Heart right ventricle (tissue), 16 donors: ENCODE measurements at regions of chr1 and their contacts with region 1.

Region 1: GRCh38 chr1:45643978-45644377 is 20.1 kb upstream of the CCDC17 start:
- DNase-seq: no peak
- ATAC-seq: no peak
- H3K4me3 ChIP-seq: no peak overlapping the region
- H3K27ac ChIP-seq: peak overlapping the region in 2 of 10 donors; percentile 0 to 17
- H3K4me1 ChIP-seq: peaks cover 0 to 36% (median 20%) of the 10 kb centered on the region in 9 donors
- H3K27me3 ChIP-seq: no peaks in the 10 kb centered on the region
- CTCF ChIP-seq: peak in 3 of 9 donors; percentile 9 to 31 (median 28)

Region 2: DNA sequence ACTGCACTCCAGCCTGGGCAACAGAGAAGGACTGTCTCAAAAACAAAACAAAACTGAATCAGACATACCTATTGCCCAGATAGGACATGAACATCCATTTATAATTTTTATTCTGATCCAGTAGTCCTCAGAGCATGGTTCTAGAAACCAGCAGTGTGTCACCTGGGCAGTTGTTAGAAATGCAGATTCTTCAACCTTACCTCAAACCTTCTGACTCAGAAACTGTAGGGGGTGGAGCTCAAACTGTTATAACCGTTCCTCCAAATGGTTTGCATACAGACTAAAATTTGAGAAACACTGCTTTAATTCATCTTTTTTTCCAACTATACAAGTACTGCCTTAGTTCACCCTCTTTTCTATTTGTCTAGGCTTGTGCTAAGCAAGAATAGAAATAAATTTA is 54.1 kb before region 1 on chr1:
- intact Hi-C with region 1: loop called in 1 of 10 experiments (anchors 10 kb)
- DNase-seq: no peak
- ATAC-seq: peak in 2 of 8 donors; percentile 3 to 10
- H3K4me3 ChIP-seq: peak overlapping the region in 3 of 10 donors; percentile 19 to 36 (median 35)
- H3K27ac ChIP-seq: peak overlapping the region in 4 of 10 donors; percentile 2 to 40 (median 35)
- H3K4me1 ChIP-seq: peaks cover 6 to 25% (median 21%) of the 10 kb centered on the region in 9 donors
- H3K27me3 ChIP-seq: no peaks in the 10 kb centered on the region
- CTCF ChIP-seq: no peak